ENCODE measurements at regions of chr4 and their contacts with region 1.

Region 1: GRCh38 chr4:113547487-113548042 is 214.0 kb downstream of the CAMK2D start:
- DNase-seq: peak; percentile 69 to 96
- ATAC-seq: peak; percentile 99 to 100 (median 99)
- H3K4me3 ChIP-seq: no peak overlapping the region
- H3K4me3 Mint-ChIP-seq: no peak overlapping the region
- H3K27ac ChIP-seq: no peak overlapping the region
- H3K27ac Mint-ChIP-seq: peak overlapping the region in 1 of 2 donors; percentile 72
- H3K4me1 ChIP-seq: peaks cover 3% of the 10 kb centered on the region
- H3K4me1 Mint-ChIP-seq: peaks cover 11% of the 10 kb centered on the region in 2 donors
- H3K27me3 ChIP-seq: no peaks in the 10 kb centered on the region
- H3K27me3 Mint-ChIP-seq: no peaks in the 10 kb centered on the region
- CTCF ChIP-seq: peak; percentile 98

Region 2: GRCh38 chr4:113355550-113356371 is 191.8 kb before region 1 on chr4:
- intact Hi-C with region 1: loop called (anchors 5 kb)
- DNase-seq: peak; percentile 34 to 73
- ATAC-seq: peak; percentile 83 to 91 (median 87)
- H3K4me3 ChIP-seq: no peak overlapping the region
- H3K4me3 Mint-ChIP-seq: peak overlapping the region; percentile 41
- H3K27ac ChIP-seq: peak overlapping the region; percentile 1
- H3K27ac Mint-ChIP-seq: peak overlapping the region; percentile 81
- H3K4me1 ChIP-seq: peaks cover 24% of the 10 kb centered on the region
- H3K4me1 Mint-ChIP-seq: peaks cover 35 to 44% of the 10 kb centered on the region in 2 donors
- H3K27me3 ChIP-seq: no peaks in the 10 kb centered on the region
- H3K27me3 Mint-ChIP-seq: peaks cover 7 to 14% of the 10 kb centered on the region in 2 donors
- CTCF ChIP-seq: no peak

Region 3: GRCh38 chr4:113564493-113564892 is 16.9 kb after region 1 on chr4:
- intact Hi-C with region 1: loop called (anchors 1 kb)
- DNase-seq: no peak
- ATAC-seq: peak in 1 of 3 donors; percentile 16
- H3K4me3 ChIP-seq: no peak overlapping the region
- H3K4me3 Mint-ChIP-seq: peak overlapping the region; percentile 85
- H3K27ac ChIP-seq: peak overlapping the region; percentile 24
- H3K27ac Mint-ChIP-seq: peak overlapping the region; percentile 74 to 82
- H3K4me1 ChIP-seq: peaks cover 10% of the 10 kb centered on the region
- H3K4me1 Mint-ChIP-seq: peaks cover 34 to 37% of the 10 kb centered on the region in 2 donors
- H3K27me3 ChIP-seq: no peaks in the 10 kb centered on the region
- H3K27me3 Mint-ChIP-seq: peaks cover 10 to 15% of the 10 kb centered on the region in 2 donors
- CTCF ChIP-seq: no peak

Region 4: GRCh38 chr4:113607998-113608397 is 60.4 kb after region 1 on chr4:
- intact Hi-C with region 1: no loop called
- DNase-seq: no peak
- ATAC-seq: no peak
- H3K4me3 ChIP-seq: no peak overlapping the region
- H3K4me3 Mint-ChIP-seq: no peak overlapping the region
- H3K27ac ChIP-seq: no peak overlapping the region
- H3K27ac Mint-ChIP-seq: no peak overlapping the region
- H3K4me1 ChIP-seq: no peaks in the 10 kb centered on the region
- H3K4me1 Mint-ChIP-seq: peaks cover 4 to 15% of the 10 kb centered on the region in 2 donors
- H3K27me3 ChIP-seq: no peaks in the 10 kb centered on the region
- H3K27me3 Mint-ChIP-seq: no peaks in the 10 kb centered on the region
- CTCF ChIP-seq: no peak

Region 5: DNA sequence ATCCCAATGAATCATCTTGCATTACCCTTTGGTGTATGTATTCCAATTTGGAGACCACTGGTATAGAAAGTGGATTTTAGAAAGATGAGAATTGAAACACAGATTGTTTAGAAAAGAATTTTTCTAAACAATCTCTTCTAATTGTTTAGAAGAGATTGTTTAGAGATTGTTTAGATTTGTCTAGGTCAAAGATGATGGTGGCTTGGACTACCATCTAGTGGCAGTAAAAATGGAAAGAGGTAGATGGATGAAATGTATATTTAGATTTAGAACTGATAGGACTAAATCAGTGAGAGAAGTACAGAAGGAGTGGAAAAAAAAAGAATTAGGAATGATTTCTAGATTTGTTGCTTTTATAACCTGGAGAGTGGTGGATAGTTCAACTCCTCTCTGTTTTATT is 361.3 kb after region 1 on chr4:
- intact Hi-C with region 1: loop called (anchors 2 kb)
- DNase-seq: peak in 1 of 2 donors; percentile 50
- ATAC-seq: no peak
- H3K4me3 ChIP-seq: no peak overlapping the region
- H3K4me3 Mint-ChIP-seq: no peak overlapping the region
- H3K27ac ChIP-seq: no peak overlapping the region
- H3K27ac Mint-ChIP-seq: no peak overlapping the region
- H3K4me1 ChIP-seq: no peaks in the 10 kb centered on the region
- H3K4me1 Mint-ChIP-seq: no peaks in the 10 kb centered on the region
- H3K27me3 ChIP-seq: peaks cover 2% of the 10 kb centered on the region
- H3K27me3 Mint-ChIP-seq: peaks cover 5 to 8% of the 10 kb centered on the region in 2 donors
- CTCF ChIP-seq: peak; percentile 40

Measured in natural killer cell (primary cell).